CD8-positive, alpha-beta memory T cell (primary cell): ENCODE measurements at regions of chr19 and their contacts with region 1.

Region 1: GRCh38 chr19:12933287-12934072 is at the start of gene FARSA:
- DNase-seq: peak; percentile 74 to 89 (median 83)
- H3K4me3 ChIP-seq: peak within 1 kb of the TSS; percentile 89
- H3K4me3 Mint-ChIP-seq: peak within 1 kb of the TSS; percentile 92 to 99 (median 98)
- H3K27ac ChIP-seq: peak within 1 kb of the TSS; percentile 80
- H3K27ac Mint-ChIP-seq: peak within 1 kb of the TSS; percentile 77 to 97 (median 94)
- H3K4me1 ChIP-seq: peaks cover 37% of the 10 kb centered on the region
- H3K4me1 Mint-ChIP-seq: peaks cover 31 to 42% (median 34%) of the 10 kb centered on the region in 3 donors
- H3K27me3 ChIP-seq: no peaks in the 10 kb centered on the region
- H3K27me3 Mint-ChIP-seq: peaks cover 0 to 1% of the 10 kb centered on the region in 2 donors
- total RNA-seq, gene FARSA: 188 to 192 TPM

Region 2: DNA sequence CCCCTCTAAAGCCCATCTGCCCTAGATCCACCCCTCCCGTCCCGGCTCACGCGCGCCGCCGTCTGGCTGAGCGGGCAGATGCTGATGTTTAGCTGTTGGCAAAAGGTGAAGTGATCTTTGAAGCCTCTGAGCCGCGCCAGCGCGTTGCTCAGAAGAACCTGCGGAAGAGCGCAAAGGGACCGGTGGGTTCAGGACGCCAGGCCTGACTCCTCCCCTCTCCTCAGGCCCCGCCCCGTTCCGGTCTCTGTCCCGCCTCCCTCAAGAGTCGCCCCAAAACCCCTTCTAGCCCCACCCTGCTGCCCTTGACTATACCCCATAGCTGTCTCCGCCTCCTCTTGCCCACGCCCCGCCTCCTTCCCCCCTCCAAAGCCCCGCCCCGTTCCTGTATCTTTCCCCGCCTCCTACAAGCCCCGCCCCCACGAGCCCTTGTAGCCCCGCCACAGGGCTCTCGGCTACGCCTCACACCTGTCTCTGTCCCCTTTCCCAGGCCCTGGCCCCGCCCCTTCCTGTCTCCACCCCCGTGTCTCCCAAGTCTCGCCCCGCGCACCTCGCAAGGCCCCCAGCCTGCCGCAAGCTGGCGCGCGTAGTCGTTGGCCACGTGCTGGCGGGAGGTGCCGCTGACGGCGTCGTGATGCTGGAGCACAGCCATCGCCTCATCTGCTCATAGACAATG is 276.4 kb before region 1 on chr19:
- CTCF ChIA-PET with region 1: no interaction called
- POLR2A ChIA-PET with region 1: no interaction called
- DNase-seq: no peak
- H3K4me3 ChIP-seq: no peak overlapping the region
- H3K4me3 Mint-ChIP-seq: no peak overlapping the region
- H3K27ac ChIP-seq: no peak overlapping the region
- H3K27ac Mint-ChIP-seq: peak overlapping the region in 1 of 8 donors; percentile 74
- H3K4me1 ChIP-seq: no peaks in the 10 kb centered on the region
- H3K4me1 Mint-ChIP-seq: peaks cover 0 to 1% (median 0%) of the 10 kb centered on the region in 3 donors
- H3K27me3 ChIP-seq: no peaks in the 10 kb centered on the region
- H3K27me3 Mint-ChIP-seq: no peaks in the 10 kb centered on the region

Region 3: GRCh38 chr19:12881172-12881808 is 52.2 kb before region 1 on chr19 and contains the start of gene DNASE2:
- CTCF ChIA-PET with region 1: interaction called, 15 read pairs
- POLR2A ChIA-PET with region 1: interaction called, 5 read pairs
- DNase-seq: peak; percentile 80 to 89 (median 84)
- H3K4me3 ChIP-seq: peak within 1 kb of the TSS; percentile 89
- H3K4me3 Mint-ChIP-seq: peak within 1 kb of the TSS; percentile 87 to 96 (median 89)
- H3K27ac ChIP-seq: peak within 1 kb of the TSS; percentile 83
- H3K27ac Mint-ChIP-seq: peak within 1 kb of the TSS; percentile 80 to 96 (median 92)
- H3K4me1 ChIP-seq: peaks cover 17% of the 10 kb centered on the region
- H3K4me1 Mint-ChIP-seq: peaks cover 23 to 39% (median 26%) of the 10 kb centered on the region in 3 donors
- H3K27me3 ChIP-seq: no peaks in the 10 kb centered on the region
- H3K27me3 Mint-ChIP-seq: no peaks in the 10 kb centered on the region
- total RNA-seq, gene DNASE2: 20.7 to 22.4 TPM

Region 4: GRCh38 chr19:12918271-12918670 is 15.2 kb before region 1 on chr19:
- CTCF ChIA-PET with region 1: interaction called, 3 read pairs
- POLR2A ChIA-PET with region 1: interaction called, 12 read pairs
- DNase-seq: no peak
- H3K4me3 ChIP-seq: no peak overlapping the region
- H3K4me3 Mint-ChIP-seq: peak overlapping the region in 1 of 7 donors; percentile 23
- H3K27ac ChIP-seq: no peak overlapping the region
- H3K27ac Mint-ChIP-seq: peak overlapping the region in 4 of 8 donors; percentile 17 to 86 (median 81)
- H3K4me1 ChIP-seq: peaks cover 24% of the 10 kb centered on the region
- H3K4me1 Mint-ChIP-seq: peaks cover 28 to 43% (median 29%) of the 10 kb centered on the region in 3 donors
- H3K27me3 ChIP-seq: no peaks in the 10 kb centered on the region
- H3K27me3 Mint-ChIP-seq: peaks cover 0 to 2% of the 10 kb centered on the region in 2 donors